ENCODE measurements at regions of chr6 and their contacts with region 1.

Region 1: GRCh38 chr6:80425089-80425823 is 318.8 kb downstream of the BCKDHB start:
- DNase-seq: peak; percentile 100
- H3K4me3 ChIP-seq: no peak overlapping the region
- CTCF ChIP-seq: no peak

Region 2: DNA sequence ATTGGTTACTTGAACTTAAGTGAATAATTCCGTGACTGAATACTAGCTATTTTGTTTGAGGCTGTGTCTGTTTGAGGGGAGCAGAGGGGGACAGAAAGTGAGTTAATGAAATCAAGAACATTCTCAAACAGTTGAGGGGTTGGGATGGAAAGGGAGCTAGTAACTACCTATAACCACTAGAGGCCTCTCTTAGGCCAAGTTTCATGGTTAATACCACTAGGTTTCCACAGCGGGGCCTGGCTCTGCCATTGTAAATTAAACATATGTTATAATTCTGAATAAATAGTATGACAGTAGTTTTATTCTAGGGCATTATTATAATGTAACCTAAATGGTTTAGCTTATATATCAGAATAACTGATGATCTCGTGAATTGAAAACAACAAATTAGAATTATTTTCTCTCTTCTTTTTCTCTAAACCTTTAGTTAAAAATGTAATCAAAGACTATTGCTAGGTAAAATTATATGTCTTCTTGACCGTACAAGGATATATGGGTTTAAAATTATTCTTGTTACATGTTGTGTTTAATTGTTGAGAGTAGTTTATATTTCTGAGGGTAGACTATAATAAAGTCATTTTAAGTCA is 210.7 kb before region 1 on chr6:
- CTCF ChIA-PET with region 1: interaction called, 16 read pairs
- POLR2A ChIA-PET with region 1: interaction called, 3 read pairs
- DNase-seq: no peak
- H3K4me3 ChIP-seq: no peak overlapping the region
- CTCF ChIP-seq: peak; percentile 77

Region 3: GRCh38 chr6:80438772-80439171 is 13.5 kb after region 1 on chr6:
- CTCF ChIA-PET with region 1: interaction called, 4 read pairs
- POLR2A ChIA-PET with region 1: interaction called, 12 read pairs
- DNase-seq: peak; percentile 71
- H3K4me3 ChIP-seq: no peak overlapping the region
- CTCF ChIP-seq: no peak

Region 4: DNA sequence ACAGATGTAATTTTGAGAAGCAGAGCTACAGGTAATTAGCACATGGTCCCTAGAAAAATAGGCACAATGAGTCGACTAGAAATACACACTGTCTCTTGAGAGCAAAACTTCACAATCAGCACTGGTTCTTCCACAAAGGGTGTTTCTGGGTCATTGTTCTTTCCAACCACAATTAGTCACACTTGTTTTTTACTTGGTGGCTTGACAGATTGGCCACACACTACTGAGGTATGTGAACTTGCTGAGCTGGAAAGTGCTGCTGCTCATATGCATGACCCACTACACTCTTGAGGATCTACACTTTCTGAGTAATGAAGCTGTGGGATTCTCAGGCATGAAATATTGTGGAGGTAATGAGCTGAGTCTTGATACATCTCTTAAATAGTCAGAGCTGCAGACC is 28.9 kb after region 1 on chr6:
- CTCF ChIA-PET with region 1: no interaction called
- POLR2A ChIA-PET with region 1: interaction called, 12 read pairs
- DNase-seq: peak; percentile 85
- H3K4me3 ChIP-seq: no peak overlapping the region
- CTCF ChIP-seq: no peak

Region 5: DNA sequence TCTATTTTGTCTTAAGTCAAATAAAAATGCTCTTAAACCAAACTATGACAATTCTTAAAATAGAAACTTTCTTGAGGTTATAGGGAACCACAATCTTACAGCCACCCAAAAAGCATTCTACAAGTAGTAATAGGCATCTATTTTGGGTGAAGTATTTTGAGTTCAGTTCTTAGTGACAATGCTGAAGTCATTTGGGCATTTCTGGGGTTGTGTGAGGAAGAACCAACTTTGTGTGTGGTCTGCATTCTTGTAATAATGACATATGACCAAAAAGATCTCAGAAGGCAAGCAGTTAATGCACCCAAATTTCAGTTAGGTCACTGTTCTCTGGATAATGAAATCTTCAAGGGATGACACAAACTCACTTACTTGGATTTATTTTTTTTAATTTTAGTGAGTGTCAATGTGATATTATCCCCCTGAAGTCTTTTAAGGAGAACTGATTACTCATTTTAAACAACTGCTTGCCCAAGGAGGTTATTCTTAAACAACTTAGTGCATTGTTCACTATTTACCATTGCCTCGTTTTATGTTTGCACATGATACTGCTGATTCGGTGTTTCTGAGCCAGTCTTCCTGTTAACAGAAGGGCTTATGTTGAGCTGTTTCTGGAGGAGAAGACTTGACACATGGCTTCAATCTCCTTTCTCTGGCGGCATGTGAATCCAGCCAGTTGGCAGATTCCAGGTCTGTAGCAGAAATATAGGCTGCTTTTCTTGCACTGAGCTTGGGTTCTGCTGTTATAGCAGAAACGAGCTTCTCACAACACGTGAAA is 300.1 kb after region 1 on chr6:
- CTCF ChIA-PET with region 1: no interaction called
- POLR2A ChIA-PET with region 1: no interaction called
- DNase-seq: no peak
- H3K4me3 ChIP-seq: no peak overlapping the region
- CTCF ChIP-seq: no peak

Measured in AG04449 (cell line).